ENCODE measurements at regions of chr4 and their contacts with region 1.

Region 1: GRCh38 chr4:108204518-108204917 is 35.8 kb upstream of the LEF1 start:
- DNase-seq: no peak
- H3K4me3 ChIP-seq: no peak overlapping the region
- CTCF ChIP-seq: no peak

Region 2: GRCh38 chr4:108247387-108248049 is 43.0 kb after region 1 on chr4:
- in situ Hi-C with region 1: loop called (anchors 5 kb)
- DNase-seq: no peak
- H3K4me3 ChIP-seq: no peak overlapping the region
- CTCF ChIP-seq: no peak

Measured in astrocyte of the cerebellum (primary cell).